ENCODE measurements at regions of chr5 and their contacts with region 1.

Region 1: DNA sequence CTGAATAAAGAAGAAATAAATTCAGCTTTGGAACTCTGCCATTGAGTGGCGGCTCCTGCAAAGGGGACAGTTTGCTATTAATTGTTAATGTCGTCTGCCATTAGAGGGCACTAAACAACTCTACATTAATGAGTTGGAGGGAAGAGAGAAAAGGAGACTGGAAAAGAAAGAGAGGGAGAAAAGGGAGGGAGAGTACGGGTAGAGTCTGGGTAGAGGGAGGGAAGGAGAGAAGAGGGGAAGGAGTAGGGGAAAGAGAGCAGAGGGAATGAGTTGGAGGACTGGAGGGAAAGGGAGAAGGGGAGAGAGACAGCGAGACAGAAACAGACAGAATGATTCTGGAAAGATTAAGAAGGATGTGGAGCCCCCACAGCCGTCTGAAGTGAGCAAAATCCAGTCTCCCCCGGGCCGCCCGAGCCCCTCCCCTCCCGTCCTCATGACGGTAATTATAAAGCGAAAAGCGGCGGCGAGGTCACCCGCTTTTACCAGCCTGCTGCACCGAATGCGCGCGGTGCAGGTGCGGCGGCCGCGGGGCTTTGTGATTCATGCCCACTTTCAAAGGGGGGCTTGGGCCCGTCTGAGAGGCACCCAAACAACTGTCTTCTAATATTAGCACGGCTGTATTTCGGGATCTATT is 1.9 kb upstream of the FST start:
- DNase-seq: peak; percentile 48 to 92 (median 75)
- H3K4me3 ChIP-seq: peak overlapping the region; percentile 46 to 79 (median 64)
- H3K27ac ChIP-seq: no peak overlapping the region
- H3K4me1 ChIP-seq: peaks cover 0 to 10% (median 0%) of the 10 kb centered on the region in 3 donors
- H3K27me3 ChIP-seq: peaks cover 4% of the 10 kb centered on the region
- CTCF ChIP-seq: peak; percentile 48

Region 2: DNA sequence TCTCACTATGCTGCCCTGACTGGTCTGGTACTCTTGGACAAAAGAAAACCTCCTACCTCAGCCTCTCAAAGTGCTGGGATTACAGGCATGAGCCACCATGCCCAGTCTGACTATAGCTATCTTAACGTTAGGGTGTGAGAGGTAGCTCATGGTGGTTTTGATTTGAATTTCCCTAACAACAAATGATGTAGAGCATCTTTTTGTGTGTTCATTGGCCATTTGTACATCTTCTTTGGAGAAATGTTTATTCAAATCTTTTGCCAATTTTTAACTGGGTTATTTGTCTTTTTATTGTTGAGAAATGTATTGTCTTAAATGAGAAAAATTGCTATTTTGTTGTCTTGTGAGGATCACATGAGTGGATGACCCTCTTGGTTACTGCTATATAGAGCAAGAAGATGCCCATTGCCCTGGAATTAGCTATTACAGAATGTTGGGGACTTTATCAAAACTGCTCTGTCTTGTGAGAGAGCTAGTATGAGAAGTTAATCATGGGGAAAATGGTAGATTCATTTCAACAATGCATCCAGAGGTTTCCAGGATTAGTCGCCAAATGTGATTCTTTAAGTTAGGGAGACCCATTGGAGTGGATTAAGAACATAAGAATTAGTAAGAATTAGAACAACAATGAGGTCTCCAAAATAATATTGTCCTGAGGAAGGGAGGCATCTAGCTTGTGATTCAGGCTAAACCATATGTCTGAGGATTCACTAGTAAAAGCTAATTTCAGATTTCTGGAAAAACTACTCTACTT is 244.7 kb before region 1 on chr5:
- intact Hi-C with region 1: no loop called
- DNase-seq: no peak
- H3K4me3 ChIP-seq: no peak overlapping the region
- H3K27ac ChIP-seq: no peak overlapping the region
- H3K4me1 ChIP-seq: no peaks in the 10 kb centered on the region
- H3K27me3 ChIP-seq: no peaks in the 10 kb centered on the region
- CTCF ChIP-seq: no peak

Region 3: DNA sequence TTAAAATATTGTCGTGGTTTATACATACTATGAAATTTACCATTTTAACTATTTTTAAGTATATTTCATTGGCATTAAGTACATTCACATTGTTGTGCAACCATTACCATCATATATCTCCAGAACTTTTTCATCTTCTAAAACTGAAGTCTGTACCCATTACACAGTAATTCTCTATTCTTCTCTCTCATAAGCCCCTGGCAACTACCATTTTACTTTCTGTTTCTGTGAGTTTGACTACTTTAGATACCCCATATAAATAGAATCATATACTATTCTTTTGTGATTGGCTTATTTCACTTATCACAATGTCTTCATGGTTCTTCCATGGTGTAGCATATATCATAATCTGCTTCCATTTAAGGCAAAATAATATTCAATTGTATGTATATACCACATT is 112.2 kb after region 1 on chr5:
- intact Hi-C with region 1: no loop called
- DNase-seq: no peak
- H3K4me3 ChIP-seq: no peak overlapping the region
- H3K27ac ChIP-seq: no peak overlapping the region
- H3K4me1 ChIP-seq: no peaks in the 10 kb centered on the region
- H3K27me3 ChIP-seq: no peaks in the 10 kb centered on the region
- CTCF ChIP-seq: no peak

Region 4: GRCh38 chr5:54224103-54224826 is 745.7 kb after region 1 on chr5:
- intact Hi-C with region 1: loop called (anchors 5 kb)
- DNase-seq: no peak
- H3K4me3 ChIP-seq: no peak overlapping the region
- H3K27ac ChIP-seq: no peak overlapping the region
- H3K4me1 ChIP-seq: no peaks in the 10 kb centered on the region
- H3K27me3 ChIP-seq: no peaks in the 10 kb centered on the region
- CTCF ChIP-seq: no peak

Measured in kidney (tissue), 22 donors.